ENCODE measurements at regions of chr20 and their contacts with region 1.

Region 1: DNA sequence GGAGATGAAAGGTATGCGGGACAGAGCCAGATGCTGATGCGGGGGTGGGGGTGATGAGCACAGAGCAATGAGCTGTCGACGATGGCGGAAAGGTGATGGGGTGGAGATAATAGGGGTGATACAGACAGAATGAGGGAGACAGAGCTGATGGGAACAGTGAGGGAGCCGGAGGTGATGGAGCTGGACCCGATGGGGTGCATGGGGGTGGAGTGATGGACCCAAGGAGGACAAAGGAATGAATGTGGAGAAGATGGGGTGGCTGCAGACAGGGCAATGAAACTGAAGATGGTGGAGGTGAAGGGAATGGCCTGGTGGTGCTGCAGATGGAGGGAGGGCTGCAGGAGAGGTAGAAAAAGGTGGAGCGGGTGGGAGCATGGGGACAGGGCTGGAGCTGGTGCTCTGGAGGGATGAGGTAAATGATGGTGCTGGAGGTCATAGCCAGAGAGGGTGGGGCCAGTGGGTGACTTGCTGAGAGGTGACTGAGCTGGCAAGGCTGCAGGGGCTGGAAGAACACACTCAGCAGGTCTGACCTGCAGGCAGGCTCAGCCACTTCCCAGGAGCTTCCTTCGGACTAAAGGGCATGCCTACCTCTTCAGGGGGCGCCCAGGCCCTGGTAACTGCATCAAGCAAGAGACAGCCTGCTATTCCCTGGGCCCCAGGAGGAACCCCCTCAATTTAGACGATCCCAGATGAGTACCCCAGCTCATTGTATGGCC is 6.0 kb upstream of the FOXS1 start:
- DNase-seq: no peak
- ATAC-seq: no peak
- H3K4me3 Mint-ChIP-seq: no peak overlapping the region
- H3K27ac Mint-ChIP-seq: no peak overlapping the region
- H3K4me1 Mint-ChIP-seq: no peaks in the 10 kb centered on the region
- H3K27me3 Mint-ChIP-seq: peaks cover 19% of the 10 kb centered on the region
- CTCF ChIP-seq: no peak

Region 2: DNA sequence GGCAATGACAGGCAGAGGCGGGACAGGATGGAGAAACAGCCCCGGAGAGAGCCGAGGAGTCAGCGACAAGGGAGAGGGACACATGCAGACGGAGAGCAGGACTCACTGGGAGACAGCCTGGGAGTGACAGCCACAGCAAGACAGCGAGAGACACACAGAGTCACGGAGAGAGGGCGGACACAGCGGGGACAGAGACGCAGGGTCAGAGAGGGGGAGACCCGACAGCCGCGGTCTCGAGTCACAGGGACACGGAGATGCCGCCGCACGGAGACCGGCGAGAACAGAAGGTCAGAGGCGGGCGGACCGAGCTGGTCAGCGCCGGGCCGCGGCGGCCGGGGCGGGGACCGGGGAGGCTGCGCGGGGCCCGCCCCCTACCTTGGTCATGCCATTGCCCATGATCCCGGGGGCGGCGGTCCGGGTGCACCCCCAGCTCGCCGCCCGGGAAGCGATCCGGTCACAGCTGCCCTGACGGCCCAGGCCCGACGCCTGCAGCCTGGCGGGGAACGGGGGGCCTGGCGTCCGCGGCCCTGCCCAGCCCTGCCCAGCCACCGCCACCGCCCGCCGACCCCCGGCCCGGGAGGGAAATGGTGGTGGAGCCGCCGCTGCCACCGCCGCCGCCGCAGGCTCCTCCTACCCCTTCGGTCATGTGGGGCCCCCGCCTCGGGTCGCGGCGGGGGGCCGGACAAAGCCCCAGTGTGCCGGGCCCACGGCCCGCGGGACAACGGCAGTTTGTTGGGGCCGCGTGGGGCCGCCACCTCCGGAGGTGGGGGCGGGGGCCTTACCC is 18.7 kb after region 1 on chr20 and contains the starts of genes DUSP15 and TTLL9:
- CTCF ChIA-PET with region 1: interaction called, 12 read pairs
- POLR2A ChIA-PET with region 1: no interaction called
- intact Hi-C with region 1: no loop called
- DNase-seq: no peak
- ATAC-seq: peak; percentile 57
- H3K4me3 Mint-ChIP-seq: peak within 1 kb of the TSS; percentile 69
- H3K27ac Mint-ChIP-seq: no peak within 1 kb of the TSS
- H3K4me1 Mint-ChIP-seq: peaks cover 8% of the 10 kb centered on the region
- H3K27me3 Mint-ChIP-seq: peaks cover 31% of the 10 kb centered on the region
- CTCF ChIP-seq: no peak
- total RNA-seq, gene DUSP15: not detected
- total RNA-seq, gene TTLL9: not detected

Region 3: GRCh38 chr20:31879143-31879987 is 28.0 kb after region 1 on chr20:
- CTCF ChIA-PET with region 1: interaction called, 24 read pairs
- POLR2A ChIA-PET with region 1: no interaction called
- intact Hi-C with region 1: no loop called
- DNase-seq: peak; percentile 88
- ATAC-seq: peak; percentile 90
- H3K4me3 Mint-ChIP-seq: peak overlapping the region; percentile 78
- H3K27ac Mint-ChIP-seq: peak overlapping the region; percentile 75
- H3K4me1 Mint-ChIP-seq: peaks cover 2% of the 10 kb centered on the region
- H3K27me3 Mint-ChIP-seq: peaks cover 4% of the 10 kb centered on the region
- CTCF ChIP-seq: no peak

Region 4: DNA sequence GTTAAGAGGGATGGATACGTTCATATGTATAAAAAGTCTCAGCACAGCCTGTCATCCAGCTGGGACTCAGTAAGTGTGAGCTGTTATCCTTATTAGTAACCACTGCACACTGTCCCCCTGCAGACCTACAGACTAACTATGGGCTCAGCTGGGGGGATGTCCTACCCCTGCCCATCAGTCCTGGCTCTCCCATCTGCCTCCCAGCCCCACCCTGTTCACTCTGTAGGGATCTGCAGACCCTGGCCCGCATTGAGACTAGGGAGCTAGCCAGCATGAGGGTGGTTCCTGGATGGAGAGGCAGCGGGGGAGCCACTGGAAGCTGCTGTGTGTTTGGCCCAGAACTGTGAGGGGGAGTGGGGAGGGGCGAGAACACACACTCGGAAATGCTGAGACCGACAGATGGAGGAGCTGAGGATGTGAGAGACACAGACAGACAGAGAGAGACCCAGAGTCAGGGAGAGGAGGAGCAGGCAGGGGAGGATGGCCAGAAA is 133.6 kb after region 1 on chr20:
- CTCF ChIA-PET with region 1: no interaction called
- POLR2A ChIA-PET with region 1: no interaction called
- intact Hi-C with region 1: no loop called
- DNase-seq: no peak
- ATAC-seq: no peak
- H3K4me3 Mint-ChIP-seq: no peak overlapping the region
- H3K27ac Mint-ChIP-seq: no peak overlapping the region
- H3K4me1 Mint-ChIP-seq: peaks cover 5% of the 10 kb centered on the region
- H3K27me3 Mint-ChIP-seq: peaks cover 4% of the 10 kb centered on the region
- CTCF ChIP-seq: no peak